Activated CD4-positive, alpha-beta memory T cell treated with anti-CD3 and anti-CD28 coated beads, Interleukin-2, amount 10 ng/mL, durations not matched to agents 7 days and 5 days (primary cell): ENCODE measurements at regions of chr17 and their contacts with region 1.

Region 1: DNA sequence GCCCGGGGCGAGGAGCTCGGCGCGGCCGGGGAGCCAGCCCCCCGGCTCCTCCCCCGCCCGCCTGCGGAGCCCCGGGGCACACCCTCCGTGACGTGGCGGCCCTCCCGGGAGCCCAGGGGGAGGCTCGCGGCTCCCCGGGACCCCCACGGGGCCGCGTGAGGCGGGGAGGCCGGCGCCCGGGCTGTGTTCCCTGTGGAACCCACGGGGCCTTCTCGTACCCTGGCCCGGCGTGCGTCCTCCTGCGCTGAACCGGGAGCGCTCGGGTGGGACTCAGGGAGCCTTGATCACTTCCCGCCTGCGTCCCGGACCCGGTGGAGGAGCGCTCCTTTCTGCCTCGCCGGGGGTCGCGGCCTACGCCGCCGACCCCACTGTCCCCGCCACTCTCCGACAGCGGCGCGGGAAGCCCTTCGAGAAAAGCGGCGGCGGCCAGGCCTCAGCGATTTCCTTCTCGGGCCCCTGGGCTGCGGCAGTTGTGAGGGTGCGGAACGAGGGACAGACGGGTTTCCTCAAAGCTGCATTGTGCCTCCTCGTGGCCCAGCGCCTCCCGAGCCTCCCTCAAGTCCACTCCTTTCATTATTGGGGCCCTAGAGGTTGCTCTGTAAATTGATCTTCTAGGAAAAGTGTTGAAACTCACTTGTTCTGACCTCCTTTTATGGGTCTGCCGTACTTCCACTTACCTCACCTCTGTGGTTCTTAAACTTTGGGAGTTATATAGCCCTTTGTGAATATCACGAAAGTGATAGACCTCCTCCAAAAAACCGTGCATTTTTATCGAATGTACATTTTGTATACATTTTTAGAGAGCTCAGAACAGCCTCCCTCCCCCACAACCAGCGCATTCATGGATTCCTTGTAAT is 597 bp downstream of the LIG3 start:
- DNase-seq: peak; percentile 81
- H3K4me3 Mint-ChIP-seq: peak overlapping the region; percentile 79
- H3K27ac Mint-ChIP-seq: peak overlapping the region; percentile 93
- H3K4me1 Mint-ChIP-seq: peaks cover 54% of the 10 kb centered on the region
- H3K27me3 Mint-ChIP-seq: no peaks in the 10 kb centered on the region

Region 2: DNA sequence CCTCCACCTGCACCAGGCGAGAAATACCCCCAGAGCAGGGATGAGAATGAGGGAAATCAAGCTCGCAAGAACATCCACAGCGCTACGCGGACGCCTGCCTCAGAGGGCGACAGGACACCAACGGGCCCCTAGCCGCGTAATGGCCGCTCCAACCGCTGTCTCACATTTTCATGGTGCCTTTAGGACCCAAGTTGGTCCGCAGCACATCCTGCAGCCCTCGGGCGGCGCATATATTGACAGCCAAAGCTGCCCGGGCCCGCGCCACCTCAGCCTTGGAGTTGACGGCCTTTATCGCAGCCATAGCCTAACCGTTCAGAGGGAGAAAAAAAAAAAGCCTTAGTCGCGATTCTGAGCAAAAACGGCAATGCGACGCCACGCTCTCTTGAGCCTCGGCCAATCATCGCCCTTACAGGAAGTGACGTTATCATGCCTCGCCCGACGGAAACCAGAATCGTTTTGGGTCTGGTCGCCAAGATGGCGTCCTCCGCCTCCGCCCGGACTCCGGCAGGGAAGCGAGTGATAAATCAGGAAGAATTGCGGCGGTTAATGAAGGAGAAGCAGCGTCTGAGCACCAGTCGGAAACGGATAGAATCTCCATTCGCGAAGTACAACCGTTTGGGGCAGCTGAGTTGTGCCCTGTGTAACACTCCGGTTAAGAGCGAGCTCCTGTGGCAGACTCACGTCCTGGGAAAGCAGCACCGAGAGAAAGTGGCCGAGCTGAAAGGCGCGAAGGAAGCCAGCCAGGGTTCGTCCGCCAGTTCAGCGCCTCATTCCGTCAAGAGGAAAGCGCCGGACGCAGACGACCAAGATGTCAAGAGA is 19.6 kb before region 1 on chr17 and contains the starts of genes CCT6B and ZNF830:
- CTCF ChIA-PET with region 1: interaction called, 7 read pairs
- POLR2A ChIA-PET with region 1: interaction called, 56 read pairs
- DNase-seq: peak; percentile 93
- H3K4me3 Mint-ChIP-seq: peak within 1 kb of the TSS; percentile 98
- H3K27ac Mint-ChIP-seq: peak within 1 kb of the TSS; percentile 97
- H3K4me1 Mint-ChIP-seq: peaks cover 31% of the 10 kb centered on the region
- H3K27me3 Mint-ChIP-seq: peaks cover 5% of the 10 kb centered on the region
- total RNA-seq, gene CCT6B: 1.5 to 1.9 TPM
- total RNA-seq, gene ZNF830: 25.2 to 25.4 TPM

Region 3: GRCh38 chr17:34990921-34991365 is 10.0 kb after region 1 on chr17:
- CTCF ChIA-PET with region 1: interaction called, 9 read pairs
- POLR2A ChIA-PET with region 1: interaction called, 31 read pairs
- DNase-seq: no peak
- H3K4me3 Mint-ChIP-seq: no peak overlapping the region
- H3K27ac Mint-ChIP-seq: peak overlapping the region; percentile 11
- H3K4me1 Mint-ChIP-seq: peaks cover 24% of the 10 kb centered on the region
- H3K27me3 Mint-ChIP-seq: no peaks in the 10 kb centered on the region

Region 4: GRCh38 chr17:34998205-34998604 is 17.3 kb after region 1 on chr17:
- CTCF ChIA-PET with region 1: interaction called, 3 read pairs
- POLR2A ChIA-PET with region 1: interaction called, 23 read pairs
- DNase-seq: peak; percentile 87
- H3K4me3 Mint-ChIP-seq: no peak overlapping the region
- H3K27ac Mint-ChIP-seq: peak overlapping the region; percentile 65
- H3K4me1 Mint-ChIP-seq: peaks cover 9% of the 10 kb centered on the region
- H3K27me3 Mint-ChIP-seq: no peaks in the 10 kb centered on the region

Region 5: GRCh38 chr17:35088881-35089585 is 108.1 kb after region 1 on chr17:
- CTCF ChIA-PET with region 1: interaction called, 8 read pairs
- POLR2A ChIA-PET with region 1: interaction called, 12 read pairs
- DNase-seq: peak; percentile 93
- H3K4me3 Mint-ChIP-seq: peak overlapping the region; percentile 89
- H3K27ac Mint-ChIP-seq: peak overlapping the region; percentile 90
- H3K4me1 Mint-ChIP-seq: peaks cover 54% of the 10 kb centered on the region
- H3K27me3 Mint-ChIP-seq: no peaks in the 10 kb centered on the region